Naive thymus-derived CD4-positive, alpha-beta T cell (primary cell): ENCODE measurements at regions of chr3 and their contacts with region 1.

Region 1: GRCh38 chr3:130892759-130893375 is 1.0 kb upstream of the ATP2C1 start:
- DNase-seq: peak in 8 of 9 donors; percentile 55 to 82 (median 76)
- ATAC-seq: peak; percentile 77
- H3K4me3 ChIP-seq: peak overlapping the region; percentile 96
- H3K4me3 Mint-ChIP-seq: peak overlapping the region; percentile 94 to 99 (median 98)
- H3K27ac ChIP-seq: peak overlapping the region; percentile 93
- H3K27ac Mint-ChIP-seq: peak overlapping the region; percentile 95 to 100 (median 99)
- H3K4me1 ChIP-seq: peaks cover 5 to 14% of the 10 kb centered on the region in 2 donors
- H3K4me1 Mint-ChIP-seq: peaks cover 25 to 45% (median 37%) of the 10 kb centered on the region in 7 donors
- H3K27me3 ChIP-seq: no peaks in the 10 kb centered on the region
- H3K27me3 Mint-ChIP-seq: peaks cover 0 to 4% (median 0%) of the 10 kb centered on the region in 5 donors

Region 2: GRCh38 chr3:130509008-130509407 is 383.9 kb before region 1 on chr3:
- CTCF ChIA-PET with region 1: no interaction called
- POLR2A ChIA-PET with region 1: no interaction called
- intact Hi-C with region 1: no loop called
- DNase-seq: no peak
- ATAC-seq: no peak
- H3K4me3 ChIP-seq: no peak overlapping the region
- H3K4me3 Mint-ChIP-seq: no peak overlapping the region
- H3K27ac ChIP-seq: no peak overlapping the region
- H3K27ac Mint-ChIP-seq: no peak overlapping the region
- H3K4me1 ChIP-seq: no peaks in the 10 kb centered on the region
- H3K4me1 Mint-ChIP-seq: no peaks in the 10 kb centered on the region
- H3K27me3 ChIP-seq: no peaks in the 10 kb centered on the region
- H3K27me3 Mint-ChIP-seq: peaks cover 6 to 52% (median 43%) of the 10 kb centered on the region in 5 donors

Region 3: DNA sequence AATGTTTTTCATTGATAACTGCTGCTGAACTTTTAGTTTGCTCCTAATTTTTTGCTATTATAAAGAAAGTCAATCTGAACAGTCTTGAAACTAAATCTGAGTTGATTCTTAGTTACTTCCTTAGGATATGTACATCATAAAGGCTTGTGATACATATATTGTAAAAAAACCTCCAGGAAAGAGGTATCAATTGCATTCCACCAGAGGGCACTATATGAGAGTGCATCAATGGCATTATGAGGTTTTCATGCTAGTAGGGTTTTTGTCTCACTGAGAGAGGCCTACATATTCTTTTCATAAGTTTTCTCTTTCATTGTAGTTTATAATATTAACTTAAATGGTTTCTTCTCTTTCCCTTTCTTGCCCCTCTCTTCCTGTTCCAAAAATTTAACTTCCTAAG is 193.1 kb before region 1 on chr3:
- CTCF ChIA-PET with region 1: no interaction called
- POLR2A ChIA-PET with region 1: no interaction called
- intact Hi-C with region 1: loop called (anchors 1 kb)
- DNase-seq: peak in 3 of 9 donors; percentile 6 to 13 (median 12)
- ATAC-seq: peak; percentile 61
- H3K4me3 ChIP-seq: no peak overlapping the region
- H3K4me3 Mint-ChIP-seq: no peak overlapping the region
- H3K27ac ChIP-seq: no peak overlapping the region
- H3K27ac Mint-ChIP-seq: peak overlapping the region in 2 of 9 donors; percentile 5 to 33
- H3K4me1 ChIP-seq: no peaks in the 10 kb centered on the region
- H3K4me1 Mint-ChIP-seq: no peaks in the 10 kb centered on the region
- H3K27me3 ChIP-seq: no peaks in the 10 kb centered on the region
- H3K27me3 Mint-ChIP-seq: no peaks in the 10 kb centered on the region

Region 4: GRCh38 chr3:130850044-130850797 is 42.6 kb before region 1 on chr3:
- CTCF ChIA-PET with region 1: no interaction called
- POLR2A ChIA-PET with region 1: no interaction called
- intact Hi-C with region 1: loop called in 1 of 2 experiments (anchors 1 kb)
- DNase-seq: peak in 6 of 9 donors; percentile 1 to 55 (median 18)
- ATAC-seq: peak; percentile 85
- H3K4me3 ChIP-seq: no peak overlapping the region
- H3K4me3 Mint-ChIP-seq: peak overlapping the region in 6 of 10 donors; percentile 5 to 54 (median 33)
- H3K27ac ChIP-seq: no peak overlapping the region
- H3K27ac Mint-ChIP-seq: peak overlapping the region in 1 of 9 donors; percentile 76
- H3K4me1 ChIP-seq: peaks cover 0 to 8% of the 10 kb centered on the region in 2 donors
- H3K4me1 Mint-ChIP-seq: peaks cover 0 to 35% (median 13%) of the 10 kb centered on the region in 7 donors
- H3K27me3 ChIP-seq: no peaks in the 10 kb centered on the region
- H3K27me3 Mint-ChIP-seq: peaks cover 10 to 31% (median 17%) of the 10 kb centered on the region in 5 donors

Region 5: DNA sequence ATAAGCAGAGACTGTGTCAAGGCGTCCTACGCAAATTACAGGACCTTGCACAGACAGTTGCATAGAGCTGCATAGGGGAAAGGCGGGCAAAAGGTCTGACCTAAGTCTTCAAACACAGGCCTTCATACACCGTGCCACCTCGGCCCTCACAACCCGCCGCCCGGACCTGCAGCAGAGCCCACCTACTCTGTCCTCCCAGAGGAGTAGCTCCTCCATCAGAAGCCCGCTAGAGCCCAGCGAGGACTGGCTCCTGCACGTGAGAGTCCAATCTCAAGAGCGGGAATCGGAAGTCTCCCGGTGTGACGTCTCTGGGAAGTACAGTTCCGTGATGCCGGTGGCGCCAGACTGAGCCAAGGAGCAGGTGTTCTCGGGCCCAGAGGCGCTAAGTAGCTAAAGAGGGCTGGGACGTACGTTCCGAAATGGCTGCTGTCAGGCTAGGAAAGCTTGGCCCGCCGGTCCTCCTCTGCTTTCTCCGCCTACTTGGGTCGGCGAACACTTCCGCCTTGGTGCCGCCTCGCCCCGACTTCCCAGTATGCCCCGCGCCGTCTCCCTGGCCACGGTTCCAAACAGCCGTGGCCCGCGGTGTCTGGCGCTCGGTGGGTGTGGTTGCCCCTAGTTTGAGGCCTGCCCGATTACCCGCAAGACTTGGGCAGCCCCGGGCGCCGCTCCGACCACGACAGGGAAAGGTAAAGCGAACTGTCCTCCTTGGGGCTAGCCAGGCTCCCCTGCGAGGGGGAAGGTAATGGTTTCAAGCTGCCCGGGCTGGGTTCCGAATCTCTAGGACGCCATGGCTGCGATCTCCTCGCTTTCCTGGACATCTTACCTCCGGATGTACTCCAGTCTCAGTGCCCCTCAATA is 133.7 kb after region 1 on chr3 and contains the starts of genes ASTE1 and NEK11:
- CTCF ChIA-PET with region 1: interaction called, 3 read pairs
- POLR2A ChIA-PET with region 1: interaction called, 11 read pairs
- intact Hi-C with region 1: loop called (anchors 1 kb)
- DNase-seq: peak; percentile 87 to 95 (median 92)
- ATAC-seq: peak; percentile 99
- H3K4me3 ChIP-seq: peak within 1 kb of the TSS; percentile 97
- H3K4me3 Mint-ChIP-seq: peak within 1 kb of the TSS; percentile 85 to 96 (median 89)
- H3K27ac ChIP-seq: peak within 1 kb of the TSS; percentile 95
- H3K27ac Mint-ChIP-seq: peak within 1 kb of the TSS; percentile 96 to 99 (median 97)
- H3K4me1 ChIP-seq: peaks cover 34 to 40% of the 10 kb centered on the region in 2 donors
- H3K4me1 Mint-ChIP-seq: peaks cover 29 to 59% (median 52%) of the 10 kb centered on the region in 7 donors
- H3K27me3 ChIP-seq: no peaks in the 10 kb centered on the region
- H3K27me3 Mint-ChIP-seq: peaks cover 0 to 6% (median 0%) of the 10 kb centered on the region in 5 donors
- total RNA-seq, gene ASTE1: 18.7 to 38.5 (median 27.0) TPM
- total RNA-seq, gene NEK11: 1.7 to 9.0 (median 5.3) TPM

Region 6: DNA sequence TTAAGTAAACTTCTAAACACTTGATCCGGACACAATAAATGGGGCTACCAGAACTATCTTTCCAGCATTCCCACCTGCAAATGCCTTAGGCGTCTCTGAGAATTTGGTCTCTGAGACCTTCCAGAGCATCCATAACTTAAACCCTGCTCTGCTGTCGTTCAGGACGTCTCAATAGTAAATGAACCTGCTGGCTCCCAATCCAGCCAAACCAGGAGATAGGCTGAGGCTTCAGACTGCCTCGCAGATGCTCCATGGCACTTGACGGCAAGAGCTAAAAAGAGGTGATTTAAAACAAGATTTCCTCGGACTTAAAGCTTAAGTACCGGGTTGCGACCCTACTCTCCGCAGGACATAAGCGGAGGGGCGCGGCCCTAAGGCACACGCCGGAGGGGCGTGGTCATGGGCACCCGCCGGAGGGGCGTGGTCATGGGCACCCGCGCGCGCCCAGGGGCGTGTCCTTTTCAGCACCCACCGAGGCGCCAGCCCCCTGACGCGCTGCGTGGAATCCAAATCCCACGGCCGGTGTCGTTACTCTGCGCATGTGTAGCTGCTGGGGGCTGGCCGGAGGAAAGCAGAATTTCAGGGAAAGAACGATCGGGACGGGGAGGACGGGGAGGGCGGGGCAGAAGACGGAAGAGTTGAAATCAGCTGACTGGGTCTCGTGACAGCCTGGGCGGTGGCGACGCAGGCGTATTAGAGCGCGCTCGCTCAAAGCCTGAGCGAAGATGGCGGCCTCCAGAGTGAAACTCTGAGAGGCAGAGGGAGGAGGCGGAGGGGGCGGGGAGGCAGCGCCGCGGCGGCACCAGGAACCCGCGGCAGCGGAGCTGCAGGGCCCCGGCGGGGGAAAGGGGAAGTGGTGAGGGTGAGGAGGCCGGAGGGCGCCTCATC is 1524.2 kb after region 1 on chr3 and contains the start of gene DNAJC13:
- CTCF ChIA-PET with region 1: no interaction called
- POLR2A ChIA-PET with region 1: no interaction called
- intact Hi-C with region 1: loop called (anchors 1 kb)
- DNase-seq: peak; percentile 80 to 93 (median 92)
- ATAC-seq: peak; percentile 97
- H3K4me3 ChIP-seq: peak within 1 kb of the TSS; percentile 94
- H3K4me3 Mint-ChIP-seq: peak within 1 kb of the TSS; percentile 97 to 100 (median 99)
- H3K27ac ChIP-seq: peak within 1 kb of the TSS; percentile 82
- H3K27ac Mint-ChIP-seq: peak within 1 kb of the TSS; percentile 93 to 99 (median 98)
- H3K4me1 ChIP-seq: peaks cover 7 to 11% of the 10 kb centered on the region in 2 donors
- H3K4me1 Mint-ChIP-seq: peaks cover 12 to 40% (median 33%) of the 10 kb centered on the region in 7 donors
- H3K27me3 ChIP-seq: no peaks in the 10 kb centered on the region
- H3K27me3 Mint-ChIP-seq: peaks cover 0 to 4% (median 0%) of the 10 kb centered on the region in 5 donors
- total RNA-seq, gene DNAJC13: 23.6 to 41.5 (median 37.5) TPM